ENCODE measurements at regions of chr17 and their contacts with region 1.

Region 1: DNA sequence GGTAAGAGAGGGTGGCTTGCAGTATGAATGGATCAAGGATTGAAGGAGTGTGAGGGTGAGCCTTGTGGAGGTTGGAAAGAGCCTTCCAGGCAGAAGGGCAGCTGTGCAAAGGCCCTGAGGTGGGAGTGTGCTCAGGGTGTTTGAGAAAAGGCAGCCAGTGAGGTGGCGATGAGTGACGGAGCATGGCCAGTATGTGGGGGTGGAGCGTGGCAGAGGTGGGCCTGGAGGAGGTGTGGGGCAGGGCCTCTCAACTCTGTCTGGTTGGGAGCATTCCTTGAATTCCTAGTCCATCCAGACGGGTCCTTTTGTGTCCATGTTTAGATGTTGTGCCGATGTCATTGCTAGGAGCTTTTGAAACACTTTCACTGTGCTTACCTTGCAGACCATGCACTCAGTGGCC is 51.3 kb downstream of the EPN2 start:
- DNase-seq: no peak
- H3K27ac ChIP-seq: no peak overlapping the region
- CTCF ChIP-seq: no peak

Region 2: GRCh38 chr17:19306160-19307111 is 18.0 kb after region 1 on chr17:
- CTCF ChIA-PET with region 1: interaction called, 10 read pairs
- POLR2A ChIA-PET with region 1: no interaction called
- DNase-seq: no peak
- H3K27ac ChIP-seq: 0 out of 2 replicates have a peak overlapping the region, but pooled peaks have one; percentile 9
- CTCF ChIP-seq: no peak

Region 3: DNA sequence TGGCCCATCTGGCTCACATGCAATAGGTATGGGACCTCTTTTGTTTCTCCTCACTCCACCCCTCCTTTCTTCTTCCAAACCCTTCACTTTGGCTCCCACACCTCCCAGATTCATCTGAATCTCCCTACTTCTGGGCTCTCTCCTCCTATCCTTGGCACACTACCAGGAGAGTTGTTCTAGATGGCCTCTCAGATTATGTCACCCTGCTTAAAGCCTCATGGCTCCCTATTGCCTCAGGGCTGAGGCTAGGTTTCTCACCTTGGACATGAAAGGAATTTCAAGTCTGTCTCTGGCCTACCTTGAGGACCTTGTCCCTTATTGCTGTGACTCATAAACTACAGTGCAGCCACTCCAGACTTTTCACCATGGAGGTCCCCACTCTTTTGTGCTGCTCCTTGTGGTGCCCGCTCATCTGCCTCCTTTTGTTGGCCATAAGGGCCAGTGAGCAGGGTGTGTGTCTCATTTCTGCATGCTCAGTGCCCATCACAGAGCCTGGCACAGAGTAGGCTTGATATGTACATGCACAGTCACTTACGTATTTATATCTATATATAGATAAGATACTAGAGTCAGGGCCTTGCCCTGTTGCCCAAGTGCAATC is 99.6 kb after region 1 on chr17:
- CTCF ChIA-PET with region 1: no interaction called
- POLR2A ChIA-PET with region 1: no interaction called
- DNase-seq: no peak
- H3K27ac ChIP-seq: peak overlapping the region; percentile 78
- CTCF ChIP-seq: no peak